ENCODE measurements at regions of chr3 and their contacts with region 1.

Region 1: DNA sequence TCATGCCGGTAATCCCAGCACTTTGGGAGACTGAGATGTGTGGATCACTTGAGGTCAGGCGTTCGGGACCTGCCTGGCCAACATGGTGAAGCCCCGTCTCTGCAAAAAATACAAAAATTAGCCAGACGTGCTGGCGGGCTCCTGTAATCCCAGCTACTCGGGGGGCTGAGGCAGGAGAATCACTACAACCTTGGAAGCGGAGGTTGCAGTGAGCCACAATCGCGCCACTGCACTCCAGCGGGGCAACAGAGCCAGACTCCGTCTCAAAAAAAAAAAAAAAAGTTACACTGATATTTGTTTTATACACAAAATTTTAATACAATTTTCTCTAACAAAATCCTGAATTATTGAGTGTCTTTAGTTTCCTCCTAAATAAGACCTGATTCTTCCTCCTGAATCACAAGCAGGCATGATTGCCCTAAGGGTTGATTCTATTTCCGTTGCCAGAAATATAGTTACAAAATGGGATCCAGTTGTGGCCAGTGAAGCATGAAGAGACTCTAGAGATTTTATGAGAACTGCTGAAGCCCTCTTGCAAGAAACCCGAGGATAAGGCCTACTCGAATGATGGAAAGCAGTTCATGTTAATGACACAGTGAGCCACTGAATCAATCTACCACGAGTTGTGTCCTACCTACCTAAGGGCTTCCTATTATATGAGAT is 9.6 kb upstream of the SMARCC1 start:
- DNase-seq: no peak
- H3K4me3 ChIP-seq: no peak overlapping the region
- H3K27ac ChIP-seq: no peak overlapping the region
- H3K4me1 ChIP-seq: no peaks in the 10 kb centered on the region
- H3K27me3 ChIP-seq: no peaks in the 10 kb centered on the region
- CTCF ChIP-seq: no peak

Region 2: DNA sequence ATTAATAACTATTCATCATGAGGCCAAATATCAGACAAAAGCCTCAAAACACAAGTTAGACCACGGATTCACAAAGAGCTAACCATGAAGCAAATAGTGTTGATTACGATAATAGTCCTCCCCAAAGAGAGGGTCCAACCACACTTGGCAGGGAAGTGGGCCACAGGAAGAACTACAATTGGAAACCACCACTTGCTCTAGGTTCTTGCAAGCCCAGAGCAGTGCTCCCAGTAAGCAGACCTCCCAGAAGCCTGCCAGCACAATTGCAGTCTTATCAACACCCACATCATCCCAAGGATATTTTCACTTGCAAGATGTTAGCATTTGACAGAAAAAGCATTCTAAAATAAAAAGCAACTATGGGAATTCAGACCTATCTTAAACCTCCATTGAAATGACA is 638.7 kb before region 1 on chr3:
- intact Hi-C with region 1: no loop called
- DNase-seq: no peak
- H3K4me3 ChIP-seq: no peak overlapping the region
- H3K27ac ChIP-seq: no peak overlapping the region
- H3K4me1 ChIP-seq: peaks cover 0 to 14% of the 10 kb centered on the region in 2 donors
- H3K27me3 ChIP-seq: no peaks in the 10 kb centered on the region
- CTCF ChIP-seq: no peak

Region 3: DNA sequence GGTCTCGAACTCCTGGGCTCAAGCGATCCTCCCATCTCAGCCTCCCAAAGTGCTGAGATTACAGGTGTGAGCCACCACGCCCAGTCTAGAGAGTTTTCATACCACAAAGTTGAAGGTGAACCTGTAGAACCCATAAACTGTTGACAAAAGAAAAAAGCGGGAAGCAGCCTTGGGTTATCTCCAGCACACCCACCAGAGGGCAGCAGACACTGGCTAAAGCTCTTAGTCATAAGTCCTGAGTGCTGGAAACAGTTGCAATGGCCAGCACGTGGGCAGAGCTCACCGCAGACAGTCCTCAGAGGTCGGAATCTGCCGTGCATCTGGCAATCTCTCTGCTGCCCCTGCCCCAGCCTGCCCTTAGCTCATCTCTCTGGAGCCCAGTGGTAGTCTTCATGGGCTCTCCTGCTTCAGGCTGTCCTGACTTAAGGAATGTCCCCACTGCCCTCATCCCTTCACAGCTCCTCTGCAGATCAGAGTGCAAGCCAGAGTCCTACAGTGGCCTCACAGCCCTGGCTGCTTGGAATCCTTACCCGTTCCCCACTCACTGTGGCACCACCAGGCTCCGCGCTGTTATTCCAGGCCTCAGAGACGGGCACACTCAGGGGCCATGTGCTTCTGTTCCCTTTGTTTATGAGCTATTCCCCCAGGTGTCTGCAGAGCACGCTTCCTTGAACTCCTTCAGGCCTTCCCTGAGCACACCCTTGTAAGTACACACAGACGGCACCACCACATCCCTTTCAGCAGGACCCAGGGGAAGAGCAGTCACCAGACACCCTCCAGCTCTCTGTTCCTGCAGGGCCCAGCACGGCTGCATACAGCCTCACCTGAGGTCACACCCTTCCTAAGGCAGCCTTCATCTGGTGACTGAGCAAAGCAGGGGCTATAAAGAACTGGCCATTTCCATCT is 269.0 kb before region 1 on chr3:
- intact Hi-C with region 1: loop called (anchors 1 kb)
- DNase-seq: peak in 1 of 2 donors; percentile 89
- H3K4me3 ChIP-seq: no peak overlapping the region
- H3K27ac ChIP-seq: no peak overlapping the region
- H3K4me1 ChIP-seq: no peaks in the 10 kb centered on the region
- H3K27me3 ChIP-seq: no peaks in the 10 kb centered on the region
- CTCF ChIP-seq: peak; percentile 85 to 91 (median 89)

Region 4: DNA sequence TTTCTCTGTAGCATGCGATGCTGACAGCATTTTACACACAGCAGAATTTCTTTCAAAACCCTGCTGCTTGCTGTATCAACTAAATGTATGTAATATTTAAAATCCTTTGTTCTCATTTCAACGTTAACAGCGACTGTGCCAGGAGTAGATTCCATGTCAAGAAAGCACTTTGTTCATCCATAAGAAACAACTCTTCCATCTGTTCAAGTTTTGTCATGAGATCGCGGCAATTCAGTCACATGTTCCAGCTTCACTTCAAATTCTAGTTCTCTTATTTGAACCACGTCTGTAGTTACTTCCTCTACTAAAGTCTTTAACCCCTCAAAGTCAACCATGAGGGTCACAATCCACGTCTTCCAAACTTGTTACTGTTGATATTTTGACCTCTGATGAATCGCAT is 60.3 kb before region 1 on chr3:
- intact Hi-C with region 1: no loop called
- DNase-seq: no peak
- H3K4me3 ChIP-seq: no peak overlapping the region
- H3K27ac ChIP-seq: no peak overlapping the region
- H3K4me1 ChIP-seq: no peaks in the 10 kb centered on the region
- H3K27me3 ChIP-seq: no peaks in the 10 kb centered on the region
- CTCF ChIP-seq: no peak

Region 5: GRCh38 chr3:47772788-47773187 is 18.5 kb before region 1 on chr3:
- intact Hi-C with region 1: no loop called
- DNase-seq: no peak
- H3K4me3 ChIP-seq: no peak overlapping the region
- H3K27ac ChIP-seq: no peak overlapping the region
- H3K4me1 ChIP-seq: no peaks in the 10 kb centered on the region
- H3K27me3 ChIP-seq: no peaks in the 10 kb centered on the region
- CTCF ChIP-seq: no peak

Region 6: GRCh38 chr3:47802734-47803477 is 11.6 kb after region 1 on chr3 and contains the start of gene DHX30:
- intact Hi-C with region 1: loop called (anchors 2 kb)
- DNase-seq: peak; percentile 62 to 93
- H3K4me3 ChIP-seq: peak within 1 kb of the TSS; percentile 94 to 97
- H3K27ac ChIP-seq: peak within 1 kb of the TSS; percentile 98 to 99
- H3K4me1 ChIP-seq: peaks cover 12 to 20% of the 10 kb centered on the region in 2 donors
- H3K27me3 ChIP-seq: no peaks in the 10 kb centered on the region
- CTCF ChIP-seq: no peak
- total RNA-seq, gene DHX30: 25.8 TPM

Region 7: DNA sequence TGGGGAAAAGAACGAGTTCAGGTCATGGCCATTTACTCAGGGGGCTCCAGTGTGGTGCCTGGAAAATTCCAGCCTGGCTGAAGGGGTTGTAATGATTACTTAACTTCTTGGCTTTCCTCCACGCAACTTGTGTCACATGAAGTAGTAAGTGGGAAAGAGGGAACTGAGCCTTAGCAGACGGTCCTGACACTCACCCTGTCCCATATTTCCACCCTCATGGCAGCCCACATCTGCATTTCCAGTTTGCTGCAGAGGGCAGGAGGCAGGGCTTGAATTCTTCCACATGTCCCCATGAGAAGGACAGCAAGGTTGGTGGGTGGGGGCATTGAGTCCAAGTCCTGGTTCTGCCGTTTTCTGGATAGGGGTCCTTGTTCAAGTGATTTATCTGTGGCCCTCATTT is 424.1 kb after region 1 on chr3:
- intact Hi-C with region 1: no loop called
- DNase-seq: peak in 1 of 2 donors; percentile 68
- H3K4me3 ChIP-seq: no peak overlapping the region
- H3K27ac ChIP-seq: peak overlapping the region; percentile 65 to 70
- H3K4me1 ChIP-seq: peaks cover 8 to 15% of the 10 kb centered on the region in 2 donors
- H3K27me3 ChIP-seq: no peaks in the 10 kb centered on the region
- CTCF ChIP-seq: no peak

Measured in ascending aorta (tissue), 2 donors.